Activated naive CD4-positive, alpha-beta T cell treated with anti-CD3 and anti-CD28 coated beads for 36 hours (primary cell): ENCODE measurements at regions of chr6 and their contacts with region 1.

Region 1: DNA sequence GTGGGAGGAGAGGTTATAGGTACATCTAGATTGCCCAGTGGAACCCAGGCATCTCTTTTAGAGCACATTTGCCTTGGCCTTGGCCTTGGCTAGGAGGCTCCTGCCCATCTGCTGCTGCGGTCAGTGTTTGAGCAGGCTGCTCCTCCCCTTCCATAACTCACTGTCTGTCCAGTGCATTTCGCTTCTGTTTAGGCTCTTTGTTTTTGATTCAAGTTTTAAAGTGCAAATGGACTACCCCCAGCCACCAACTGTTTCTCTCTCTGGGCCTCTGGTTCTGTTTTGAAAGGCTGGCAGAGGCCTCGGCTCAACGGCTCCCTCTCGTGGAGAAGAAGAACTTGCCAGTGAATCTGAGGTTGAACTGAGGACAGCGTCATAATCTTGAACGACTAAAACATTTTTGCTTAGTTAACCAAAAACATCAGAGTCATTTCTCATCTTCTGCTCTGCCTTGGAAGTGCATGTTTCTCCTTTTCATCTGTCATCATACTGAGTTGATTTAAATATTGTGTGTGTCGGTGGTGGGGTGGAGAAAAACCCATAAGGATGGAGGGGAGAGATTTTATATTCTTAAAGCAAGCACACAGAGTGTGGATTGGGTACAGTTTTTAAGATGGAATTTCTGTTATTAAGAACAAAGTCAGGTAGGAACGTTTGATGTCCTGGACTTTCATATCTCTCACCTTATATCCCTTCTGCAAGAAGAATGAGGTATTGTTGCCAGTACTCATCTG is 171.4 kb downstream of the DTNBP1 start:
- DNase-seq: peak; percentile 86
- H3K4me3 Mint-ChIP-seq: no peak overlapping the region
- H3K27ac Mint-ChIP-seq: peak overlapping the region; percentile 51
- H3K4me1 Mint-ChIP-seq: peaks cover 36% of the 10 kb centered on the region
- H3K27me3 Mint-ChIP-seq: no peaks in the 10 kb centered on the region

Region 2: DNA sequence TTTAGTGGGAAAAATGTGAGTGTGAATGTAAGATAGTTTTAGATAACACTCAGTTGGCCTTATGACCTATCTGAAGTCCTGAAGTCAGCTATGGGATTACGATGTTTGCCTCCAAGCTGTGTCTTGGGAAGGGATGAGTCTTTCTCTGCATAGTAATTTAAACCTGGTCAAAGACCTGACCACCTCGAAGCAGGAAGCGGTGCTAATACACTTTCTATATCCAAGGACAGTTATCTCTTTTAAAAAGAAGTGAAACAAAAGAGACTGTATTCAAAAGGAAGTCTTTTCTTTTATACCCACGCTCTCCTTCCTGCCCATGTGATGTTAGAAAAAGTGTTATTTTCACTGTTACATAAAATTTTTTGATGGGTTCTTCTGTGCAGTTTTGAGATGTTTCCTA is 150.6 kb before region 1 on chr6:
- CTCF ChIA-PET with region 1: interaction called, 3 read pairs
- intact Hi-C with region 1: loop called (anchors 5 kb)
- DNase-seq: no peak
- H3K4me3 Mint-ChIP-seq: peak overlapping the region; percentile 37
- H3K27ac Mint-ChIP-seq: peak overlapping the region; percentile 70
- H3K4me1 Mint-ChIP-seq: peaks cover 85% of the 10 kb centered on the region
- H3K27me3 Mint-ChIP-seq: no peaks in the 10 kb centered on the region

Region 3: DNA sequence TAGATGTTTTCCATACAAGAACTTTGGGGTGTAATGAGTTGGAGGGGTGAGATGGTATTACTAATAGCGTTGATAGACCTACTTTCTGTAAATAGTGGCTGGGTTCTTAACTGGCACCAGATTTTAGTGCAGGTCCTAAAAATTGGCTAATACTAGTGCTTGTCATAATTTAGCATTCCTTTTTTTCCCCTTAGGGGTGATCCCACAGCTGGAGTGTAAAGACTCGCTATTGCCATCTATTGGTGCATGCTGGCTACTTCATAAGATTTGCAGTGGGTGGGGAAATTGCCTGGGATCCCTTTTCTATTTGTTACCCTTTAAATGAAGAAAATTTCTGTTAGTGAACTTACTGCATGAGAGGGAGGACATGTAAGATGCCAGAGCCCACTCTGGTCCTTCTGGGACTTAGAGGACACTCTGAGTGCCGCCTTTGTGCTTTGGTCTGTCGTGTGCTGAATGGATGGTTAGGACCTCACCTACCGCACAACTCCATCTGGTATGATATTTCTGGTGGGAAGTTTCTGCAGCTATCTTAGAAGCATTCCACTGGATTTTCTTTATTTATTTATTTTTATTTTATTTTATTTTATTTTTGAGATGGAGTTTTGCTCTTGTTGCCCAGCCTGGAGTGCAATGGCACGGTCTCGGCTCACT is 50.1 kb before region 1 on chr6:
- CTCF ChIA-PET with region 1: no interaction called
- intact Hi-C with region 1: loop called (anchors 2 kb)
- DNase-seq: peak; percentile 60
- H3K4me3 Mint-ChIP-seq: no peak overlapping the region
- H3K27ac Mint-ChIP-seq: no peak overlapping the region
- H3K4me1 Mint-ChIP-seq: peaks cover 57% of the 10 kb centered on the region
- H3K27me3 Mint-ChIP-seq: no peaks in the 10 kb centered on the region